OCI-LY7 (cell line): ENCODE measurements at regions of chr5 and their contacts with region 1.

Region 1: GRCh38 chr5:157026789-157027424 is 32.0 kb downstream of the HAVCR1 start:
- DNase-seq: peak; percentile 64
- H3K4me3 ChIP-seq: no peak overlapping the region
- H3K27ac ChIP-seq: no peak overlapping the region
- H3K4me1 ChIP-seq: peaks cover 59% of the 10 kb centered on the region
- CTCF ChIP-seq: peak; percentile 97

Region 2: DNA sequence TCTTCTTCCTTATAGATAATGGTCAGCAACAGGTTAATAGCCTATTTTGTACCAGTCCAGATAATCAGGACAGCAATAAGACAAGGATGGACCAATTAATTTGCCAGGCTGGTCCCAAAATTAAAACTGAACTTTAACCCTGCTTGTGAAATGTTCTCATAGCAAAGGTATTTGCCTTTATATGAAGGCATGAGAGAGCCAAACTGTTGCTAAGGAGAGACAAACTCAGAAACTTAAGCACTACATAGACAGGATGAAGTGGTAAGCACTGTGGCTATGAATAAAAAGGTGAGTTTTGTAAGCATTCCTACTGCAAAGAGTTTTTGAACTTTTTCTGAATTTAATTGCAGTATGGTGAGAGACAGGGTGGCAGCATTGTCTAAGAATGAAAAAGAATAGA is 351.5 kb before region 1 on chr5:
- CTCF ChIA-PET with region 1: no interaction called
- POLR2A ChIA-PET with region 1: no interaction called
- intact Hi-C with region 1: loop called (anchors 10 kb)
- DNase-seq: no peak
- H3K4me3 ChIP-seq: no peak overlapping the region
- H3K27ac ChIP-seq: no peak overlapping the region
- H3K4me1 ChIP-seq: no peaks in the 10 kb centered on the region
- CTCF ChIP-seq: no peak

Region 3: GRCh38 chr5:156715287-156715686 is 311.6 kb before region 1 on chr5:
- CTCF ChIA-PET with region 1: no interaction called
- POLR2A ChIA-PET with region 1: no interaction called
- intact Hi-C with region 1: loop called (anchors 1 kb)
- DNase-seq: no peak
- H3K4me3 ChIP-seq: no peak overlapping the region
- H3K27ac ChIP-seq: no peak overlapping the region
- H3K4me1 ChIP-seq: peaks cover 16% of the 10 kb centered on the region
- CTCF ChIP-seq: no peak

Region 4: GRCh38 chr5:156824800-156825199 is 202.1 kb before region 1 on chr5:
- CTCF ChIA-PET with region 1: no interaction called
- POLR2A ChIA-PET with region 1: no interaction called
- intact Hi-C with region 1: loop called (anchors 5 kb)
- DNase-seq: peak; percentile 67
- H3K4me3 ChIP-seq: peak overlapping the region; percentile 48
- H3K27ac ChIP-seq: peak overlapping the region; percentile 77
- H3K4me1 ChIP-seq: peaks cover 89% of the 10 kb centered on the region
- CTCF ChIP-seq: peak; percentile 83

Region 5: DNA sequence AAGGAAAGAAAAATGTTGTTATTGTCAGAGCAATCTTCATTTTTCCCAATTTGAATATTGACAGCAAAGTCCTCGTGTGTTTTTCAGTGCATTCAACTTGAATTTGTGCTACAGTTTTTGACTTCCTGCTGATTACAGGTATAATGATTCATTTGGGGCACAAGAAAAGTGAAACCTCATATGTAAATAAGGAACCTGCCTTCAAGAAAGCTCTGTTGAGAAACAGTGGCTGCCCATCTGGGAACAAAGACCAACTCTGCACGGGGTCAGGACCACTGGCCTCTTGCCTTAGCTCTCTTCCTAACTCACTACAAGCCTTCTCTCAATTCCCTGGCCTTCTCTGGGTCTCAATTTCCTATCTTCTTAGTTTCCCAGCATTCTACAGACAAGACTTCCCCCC is 84.8 kb before region 1 on chr5:
- CTCF ChIA-PET with region 1: no interaction called
- POLR2A ChIA-PET with region 1: interaction called, 10 read pairs
- intact Hi-C with region 1: no loop called
- DNase-seq: peak; percentile 76
- H3K4me3 ChIP-seq: peak overlapping the region; percentile 18
- H3K27ac ChIP-seq: peak overlapping the region; percentile 70
- H3K4me1 ChIP-seq: peaks cover 37% of the 10 kb centered on the region
- CTCF ChIP-seq: no peak

Region 6: DNA sequence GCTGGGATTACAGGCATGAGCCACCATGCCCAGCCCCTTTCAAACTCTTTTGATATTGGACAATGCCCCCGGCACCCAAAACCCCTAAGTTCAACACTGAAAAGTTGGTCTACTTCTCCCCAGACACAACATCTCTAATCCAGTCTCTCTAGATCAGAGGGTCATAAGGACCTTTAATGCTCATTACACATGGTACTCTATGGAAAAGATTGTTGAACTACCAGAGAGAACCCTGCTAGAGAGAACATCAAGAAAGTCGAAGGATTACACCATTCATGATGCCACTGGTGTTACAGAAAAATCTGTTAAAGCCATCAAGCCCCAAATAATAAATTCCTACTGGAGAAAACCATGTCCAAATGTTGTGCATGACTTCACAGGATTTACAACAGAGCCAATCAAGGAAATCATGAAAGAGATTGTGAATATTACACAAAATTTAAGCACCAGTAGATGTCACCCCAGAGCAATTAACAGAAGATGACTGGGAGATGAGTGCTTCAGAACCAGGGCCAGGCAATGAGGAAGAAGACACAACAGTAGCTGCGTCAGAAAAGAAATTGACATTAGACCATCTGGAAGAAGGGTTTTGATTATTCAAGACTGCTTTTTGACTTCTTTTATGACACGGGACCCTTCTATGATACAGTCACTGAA is 404.8 kb after region 1 on chr5:
- CTCF ChIA-PET with region 1: no interaction called
- POLR2A ChIA-PET with region 1: no interaction called
- intact Hi-C with region 1: no loop called
- DNase-seq: peak; percentile 82
- H3K4me3 ChIP-seq: no peak overlapping the region
- H3K27ac ChIP-seq: no peak overlapping the region
- H3K4me1 ChIP-seq: peaks cover 9% of the 10 kb centered on the region
- CTCF ChIP-seq: peak; percentile 87